ENCODE measurements at regions of chr3 and their contacts with region 1.

Region 1: DNA sequence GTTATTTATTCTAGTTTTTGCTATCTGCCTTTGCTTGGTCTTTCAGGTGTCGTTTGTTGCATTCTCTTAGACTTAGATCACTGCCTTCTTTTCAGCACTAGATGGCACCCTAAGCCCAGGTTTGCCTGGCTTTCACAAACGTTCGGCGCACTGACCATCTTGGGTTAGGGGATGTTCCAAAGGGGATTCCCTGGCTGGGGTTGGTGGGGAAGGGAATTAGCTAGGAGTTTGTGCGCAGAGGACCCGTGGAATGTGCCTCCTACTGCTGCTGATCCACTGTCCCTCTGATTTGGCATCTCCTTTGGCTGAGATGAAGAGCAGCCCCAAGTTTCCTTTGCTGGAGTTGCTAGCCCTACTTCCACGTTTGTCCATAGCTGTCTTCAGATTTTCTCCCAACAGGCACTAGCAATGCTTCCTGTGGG is 33.9 kb downstream of the PFN2 start:
- DNase-seq: peak; percentile 59
- ATAC-seq: peak; percentile 55
- H3K4me3 Mint-ChIP-seq: no peak overlapping the region
- H3K27ac Mint-ChIP-seq: no peak overlapping the region
- H3K4me1 Mint-ChIP-seq: peaks cover 18% of the 10 kb centered on the region
- H3K27me3 Mint-ChIP-seq: no peaks in the 10 kb centered on the region

Region 2: DNA sequence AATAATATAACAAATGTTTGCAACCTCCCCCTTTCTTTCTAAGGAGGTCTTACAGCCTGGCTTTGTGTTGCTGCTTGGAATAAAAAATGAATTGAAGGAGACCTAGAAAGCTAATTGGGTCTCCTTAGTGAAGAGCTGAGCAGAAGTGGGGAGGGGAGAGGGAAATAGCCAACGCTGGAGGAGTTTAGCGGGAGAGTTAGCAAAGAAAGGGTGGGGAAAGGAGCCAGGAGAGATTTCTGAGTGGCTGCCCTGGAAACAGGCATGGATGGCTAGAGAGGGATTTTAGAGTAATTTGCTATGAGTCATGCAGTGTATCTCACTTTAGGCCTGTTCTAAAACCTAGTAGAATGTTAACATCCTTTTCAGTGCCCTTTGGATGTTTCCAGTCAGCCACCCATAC is 79.1 kb after region 1 on chr3:
- CTCF ChIA-PET with region 1: no interaction called
- POLR2A ChIA-PET with region 1: no interaction called
- intact Hi-C with region 1: no loop called
- DNase-seq: no peak
- ATAC-seq: no peak
- H3K4me3 Mint-ChIP-seq: no peak overlapping the region
- H3K27ac Mint-ChIP-seq: no peak overlapping the region
- H3K4me1 Mint-ChIP-seq: no peaks in the 10 kb centered on the region
- H3K27me3 Mint-ChIP-seq: peaks cover 8% of the 10 kb centered on the region

Region 3: GRCh38 chr3:150183678-150184425 is 247.0 kb after region 1 on chr3:
- CTCF ChIA-PET with region 1: interaction called, 7 read pairs
- POLR2A ChIA-PET with region 1: no interaction called
- intact Hi-C with region 1: loop called (anchors 1 kb)
- DNase-seq: peak; percentile 71
- ATAC-seq: peak; percentile 95
- H3K4me3 Mint-ChIP-seq: no peak overlapping the region
- H3K27ac Mint-ChIP-seq: no peak overlapping the region
- H3K4me1 Mint-ChIP-seq: no peaks in the 10 kb centered on the region
- H3K27me3 Mint-ChIP-seq: peaks cover 26% of the 10 kb centered on the region

Region 4: DNA sequence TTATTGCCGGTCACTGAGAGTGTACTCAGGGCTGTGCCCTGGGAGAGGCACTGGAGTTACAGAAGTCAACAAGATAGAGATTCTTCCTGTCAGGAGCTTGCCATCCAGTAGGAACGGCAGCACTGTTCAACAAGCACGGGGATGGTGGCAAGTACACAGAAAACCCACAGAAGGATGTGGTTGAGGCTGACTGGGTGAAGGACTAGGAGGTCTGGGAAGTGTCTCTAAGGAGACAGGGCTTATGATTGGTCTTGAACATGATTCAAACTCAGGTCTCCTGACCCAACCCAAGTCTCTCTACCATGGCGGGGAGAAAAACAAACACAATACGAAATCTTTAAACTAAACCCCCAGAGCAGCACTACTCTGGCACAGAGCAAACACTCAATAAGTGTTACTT is 729.3 kb after region 1 on chr3:
- CTCF ChIA-PET with region 1: no interaction called
- POLR2A ChIA-PET with region 1: no interaction called
- intact Hi-C with region 1: no loop called
- DNase-seq: peak; percentile 12
- ATAC-seq: peak; percentile 57
- H3K4me3 Mint-ChIP-seq: no peak overlapping the region
- H3K27ac Mint-ChIP-seq: no peak overlapping the region
- H3K4me1 Mint-ChIP-seq: peaks cover 6% of the 10 kb centered on the region
- H3K27me3 Mint-ChIP-seq: peaks cover 2% of the 10 kb centered on the region

Measured in activated CD4-positive, alpha-beta T cell treated with anti-CD3 and anti-CD28 coated beads for 36 hours (primary cell).